Activated CD4-positive, alpha-beta T cell treated with anti-CD3 and anti-CD28 coated beads, Interleukin-2, amount 10 ng/mL, durations not matched to agents 24 days and 14 days (primary cell): ENCODE measurements at regions of chr18 and their contacts with region 1.

Region 1: GRCh38 chr18:46213295-46213694 is 109.1 kb downstream of the HAUS1 start:
- DNase-seq: no peak
- H3K4me3 Mint-ChIP-seq: peak overlapping the region; percentile 22
- H3K27ac Mint-ChIP-seq: peak overlapping the region; percentile 44
- H3K4me1 Mint-ChIP-seq: peaks cover 63% of the 10 kb centered on the region
- H3K27me3 Mint-ChIP-seq: no peaks in the 10 kb centered on the region

Region 2: GRCh38 chr18:46104128-46104911 is 109.0 kb before region 1 on chr18 and contains the start of gene HAUS1:
- intact Hi-C with region 1: loop called (anchors 5 kb)
- DNase-seq: peak; percentile 96
- H3K4me3 Mint-ChIP-seq: peak within 1 kb of the TSS; percentile 96
- H3K27ac Mint-ChIP-seq: peak within 1 kb of the TSS; percentile 94
- H3K4me1 Mint-ChIP-seq: peaks cover 21% of the 10 kb centered on the region
- H3K27me3 Mint-ChIP-seq: no peaks in the 10 kb centered on the region
- total RNA-seq, gene HAUS1: 49.5 and 49.6 TPM in 2 replicates

Region 3: GRCh38 chr18:46148810-46149209 is 64.5 kb before region 1 on chr18:
- intact Hi-C with region 1: loop called (anchors 1 kb)
- DNase-seq: peak; percentile 88
- H3K4me3 Mint-ChIP-seq: no peak overlapping the region
- H3K27ac Mint-ChIP-seq: peak overlapping the region; percentile 7
- H3K4me1 Mint-ChIP-seq: peaks cover 26% of the 10 kb centered on the region
- H3K27me3 Mint-ChIP-seq: no peaks in the 10 kb centered on the region

Region 4: GRCh38 chr18:46199515-46200147 is 13.7 kb before region 1 on chr18:
- intact Hi-C with region 1: loop called (anchors 2 kb)
- DNase-seq: no peak
- H3K4me3 Mint-ChIP-seq: no peak overlapping the region
- H3K27ac Mint-ChIP-seq: peak overlapping the region; percentile 71
- H3K4me1 Mint-ChIP-seq: peaks cover 44% of the 10 kb centered on the region
- H3K27me3 Mint-ChIP-seq: no peaks in the 10 kb centered on the region

Region 5: DNA sequence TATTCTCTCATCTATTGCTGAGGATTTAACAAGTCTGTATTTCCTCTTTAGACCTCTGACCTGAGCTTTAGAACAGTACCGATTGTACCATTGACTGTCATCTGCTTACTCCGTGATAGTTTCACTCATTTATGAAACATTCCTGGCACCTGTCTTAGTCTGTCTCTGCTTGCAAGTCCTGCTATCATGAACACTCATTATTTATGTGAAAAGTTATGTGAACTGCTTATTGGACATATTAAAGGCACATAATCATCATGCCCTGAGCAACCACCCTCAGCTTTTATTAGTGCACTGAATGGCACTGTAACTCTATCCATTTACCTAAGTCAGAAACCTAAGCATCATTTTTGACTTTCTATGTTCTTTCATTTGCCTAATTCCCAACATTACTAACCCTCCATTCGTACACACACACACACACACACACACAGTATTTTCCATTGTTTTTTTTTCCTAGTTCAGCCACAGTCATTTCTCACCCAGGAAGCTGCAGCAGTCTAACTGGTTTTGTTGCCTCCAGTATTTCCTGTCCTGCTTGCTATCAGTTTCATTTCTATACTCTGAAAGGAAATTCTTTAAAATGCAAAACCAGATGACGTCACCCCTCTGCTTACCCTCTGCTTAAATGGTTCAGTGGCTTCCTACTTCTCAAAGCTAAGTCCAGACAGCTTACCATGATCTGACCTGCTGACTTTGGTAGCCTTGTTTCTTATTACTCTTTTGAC is 37.0 kb after region 1 on chr18:
- intact Hi-C with region 1: loop called (anchors 1 kb)
- DNase-seq: peak; percentile 92
- H3K4me3 Mint-ChIP-seq: peak overlapping the region; percentile 71
- H3K27ac Mint-ChIP-seq: peak overlapping the region; percentile 90
- H3K4me1 Mint-ChIP-seq: peaks cover 52% of the 10 kb centered on the region
- H3K27me3 Mint-ChIP-seq: peaks cover 2% of the 10 kb centered on the region